Right ventricle myocardium superior (tissue), 1 donor: ENCODE measurements at regions of chr2 and their contacts with region 1.

Region 1: DNA sequence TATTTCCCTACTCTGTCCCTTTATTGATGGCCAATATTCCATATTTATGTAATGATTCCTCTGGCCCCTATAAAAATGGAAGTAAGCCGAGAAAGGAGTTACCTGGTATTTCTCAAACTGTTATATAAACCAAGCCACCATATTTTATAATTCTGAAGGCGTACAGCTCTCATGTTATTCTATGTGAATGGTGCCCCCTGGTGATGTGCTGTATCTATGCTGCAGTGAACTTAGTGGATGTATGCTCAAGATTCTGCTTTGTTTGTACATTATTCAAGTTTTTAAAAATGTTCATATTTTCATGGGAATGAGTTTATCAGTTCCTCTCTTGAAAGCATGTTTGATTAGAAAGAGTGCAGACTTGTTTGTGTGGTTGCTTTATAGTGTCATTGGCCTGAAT is 194.5 kb upstream of the LRRTM1 start:
- DNase-seq: no peak
- ATAC-seq: peak; percentile 87

Region 2: GRCh38 chr2:80073134-80073561 is 425.9 kb before region 1 on chr2:
- intact Hi-C with region 1: loop called (anchors 5 kb)
- DNase-seq: no peak
- ATAC-seq: peak; percentile 73

Region 3: GRCh38 chr2:80437959-80438358 is 61.1 kb before region 1 on chr2:
- intact Hi-C with region 1: no loop called
- DNase-seq: no peak
- ATAC-seq: no peak